HCT116 (cell line): ENCODE measurements at regions of chr2 and their contacts with region 1.

Region 1: DNA sequence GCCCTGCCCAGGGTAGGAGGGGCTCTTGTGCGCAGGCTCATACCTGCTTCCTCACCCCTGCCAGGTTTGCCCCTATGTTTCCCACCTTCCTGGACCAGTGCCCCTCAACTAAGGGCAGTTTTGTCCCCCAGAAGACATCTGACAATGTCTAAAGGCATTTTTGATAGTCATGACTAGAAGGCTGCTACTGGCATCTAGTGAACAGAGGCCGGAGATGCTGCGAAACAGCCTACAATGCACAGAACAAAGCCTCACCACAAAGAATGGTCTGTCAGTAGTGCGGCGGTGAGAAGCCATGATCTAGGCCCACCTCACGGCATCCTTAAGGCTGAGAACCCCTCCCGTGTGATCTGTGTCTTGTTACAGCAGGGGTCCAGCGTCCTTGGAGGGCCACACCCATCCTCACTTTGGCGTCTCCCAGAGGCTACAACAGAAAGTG is 96.0 kb downstream of the TMEM17 start:
- DNase-seq: no peak
- ATAC-seq: no peak
- H3K4me3 ChIP-seq: no peak overlapping the region
- H3K27ac ChIP-seq: no peak overlapping the region
- H3K4me1 ChIP-seq: peaks cover 15 to 25% of the 10 kb centered on the region in 2 experiments
- H3K27me3 ChIP-seq: no peaks in the 10 kb centered on the region
- CTCF ChIP-seq: 0 out of 6 replicates have a peak, but pooled peaks of 1 of the 3 experiments have one; percentile 35
- POLR2A ChIP-seq: no peak
- RAD21 ChIP-seq: peak; percentile 73

Region 2: DNA sequence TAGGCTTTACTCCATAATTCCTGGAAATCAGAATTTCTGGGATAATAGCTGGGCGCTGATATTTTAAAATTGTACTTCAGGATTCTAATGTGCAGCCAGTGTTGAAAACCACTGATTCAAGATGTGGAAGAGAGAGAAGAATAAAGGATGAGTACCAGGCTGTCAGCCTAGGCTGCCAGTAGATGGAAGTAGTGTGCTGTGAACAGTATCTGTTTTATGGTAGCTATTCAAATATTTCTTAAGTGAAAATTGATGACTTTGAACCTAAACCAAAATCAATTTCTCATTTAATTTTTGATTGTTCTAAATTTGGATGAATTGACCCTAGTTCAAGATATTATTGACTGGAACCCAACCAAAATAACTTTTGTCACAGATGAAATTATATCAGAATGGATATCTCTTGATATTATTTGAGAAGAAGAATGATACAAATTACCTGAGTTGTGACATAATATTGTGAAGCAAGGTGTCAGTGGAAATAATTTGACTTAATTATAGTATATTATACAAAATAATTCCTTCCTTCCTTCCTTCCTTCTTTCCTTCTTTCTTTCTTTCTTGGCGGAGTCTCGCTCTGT is 416.5 kb before region 1 on chr2:
- CTCF ChIA-PET with region 1: interaction called, 53 read pairs
- POLR2A ChIA-PET with region 1: interaction called, 7 read pairs
- RAD21 ChIA-PET with region 1: interaction called, 3 to 5 read pairs
- intact Hi-C with region 1: loop called (anchors 1 kb)
- DNase-seq: peak; percentile 38
- ATAC-seq: peak; percentile 78
- H3K4me3 ChIP-seq: no peak overlapping the region
- H3K27ac ChIP-seq: no peak overlapping the region
- H3K4me1 ChIP-seq: peaks cover 4 to 5% of the 10 kb centered on the region in 2 experiments
- H3K27me3 ChIP-seq: no peaks in the 10 kb centered on the region
- CTCF ChIP-seq: peak; percentile 64 to 73 (median 66); a peak in 5 of 6 replicates
- POLR2A ChIP-seq: no peak
- RAD21 ChIP-seq: peak; percentile 90

Region 3: DNA sequence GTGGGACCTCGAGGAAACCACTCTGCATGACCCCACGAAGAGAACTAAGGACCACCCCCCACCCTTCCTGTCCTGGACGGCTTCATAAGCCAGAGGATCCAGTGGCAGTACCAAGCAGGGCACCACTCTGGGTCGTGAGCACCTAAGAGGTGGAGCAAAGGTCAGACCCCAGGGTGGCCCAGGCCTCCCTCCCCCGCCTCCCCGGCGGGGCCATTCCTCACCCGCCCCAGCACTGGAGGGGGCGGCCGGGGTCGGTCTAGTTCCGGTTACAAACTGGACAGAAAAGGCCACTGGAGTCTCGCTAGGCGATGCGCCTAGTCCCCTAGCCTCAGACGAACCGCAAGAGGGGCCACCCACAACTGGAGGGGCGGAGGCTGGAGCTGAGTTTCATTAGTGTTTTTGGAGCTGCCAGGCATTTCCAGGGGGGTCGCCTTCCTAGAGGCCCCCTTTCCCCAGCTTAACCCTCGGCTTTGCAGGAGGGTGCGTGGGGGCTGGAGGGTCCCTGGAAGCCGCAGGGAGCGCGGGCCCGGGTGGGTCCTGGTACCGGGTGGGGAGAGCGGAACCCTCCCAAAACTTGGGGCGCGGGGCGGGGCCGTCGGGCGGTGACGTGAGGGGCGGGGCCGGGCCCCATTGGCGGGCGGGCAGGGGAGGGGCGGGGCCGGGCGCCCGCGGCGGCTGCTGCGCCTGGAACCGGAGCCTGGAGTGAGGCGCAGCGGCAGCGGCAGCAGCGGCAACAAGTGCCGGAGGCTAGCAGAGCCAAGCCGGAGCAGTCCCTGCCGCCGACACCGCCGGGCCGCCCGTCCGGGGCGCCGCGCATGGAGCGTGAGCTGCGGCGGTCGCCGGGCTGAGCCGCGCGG is 214.4 kb before region 1 on chr2 and contains the start of gene B3GNT2:
- CTCF ChIA-PET with region 1: no interaction called
- POLR2A ChIA-PET with region 1: no interaction called
- RAD21 ChIA-PET with region 1: no interaction called
- intact Hi-C with region 1: loop called (anchors 2 kb)
- DNase-seq: peak; percentile 19
- ATAC-seq: peak; percentile 84
- H3K4me3 ChIP-seq: peak within 1 kb of the TSS; percentile 82 to 92
- H3K27ac ChIP-seq: peak within 1 kb of the TSS; percentile 88
- H3K4me1 ChIP-seq: peaks cover 2 to 20% of the 10 kb centered on the region in 2 experiments; a peak in 3 of 4 replicates
- H3K27me3 ChIP-seq: no peaks in the 10 kb centered on the region
- CTCF ChIP-seq: no peak
- POLR2A ChIP-seq: peak; percentile 44
- RAD21 ChIP-seq: no peak
- total RNA-seq, gene B3GNT2: 21.5 TPM

Region 4: DNA sequence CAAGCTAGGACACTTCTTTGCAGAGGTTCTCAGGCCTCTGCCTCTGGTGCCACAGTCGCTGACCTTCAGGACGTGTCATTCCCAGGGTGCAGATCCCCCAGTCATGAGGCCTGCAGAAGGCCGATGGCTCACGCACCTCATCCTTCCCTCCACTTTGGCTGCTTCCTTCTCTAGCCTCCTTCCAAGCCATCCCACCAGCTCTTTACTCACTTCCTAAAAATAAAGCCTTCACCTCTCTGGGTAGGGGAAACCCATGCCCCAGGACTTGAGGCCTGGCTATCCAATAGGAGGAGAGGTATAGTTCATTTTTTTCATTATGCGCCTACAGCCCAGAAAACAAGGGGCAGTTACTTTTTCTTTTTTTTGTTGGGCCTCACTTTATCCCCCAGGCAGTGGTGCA is 122.8 kb before region 1 on chr2:
- CTCF ChIA-PET with region 1: no interaction called
- POLR2A ChIA-PET with region 1: no interaction called
- RAD21 ChIA-PET with region 1: no interaction called
- intact Hi-C with region 1: no loop called
- DNase-seq: no peak
- ATAC-seq: no peak
- H3K4me3 ChIP-seq: no peak overlapping the region
- H3K27ac ChIP-seq: no peak overlapping the region
- H3K4me1 ChIP-seq: peaks cover 15 to 16% of the 10 kb centered on the region in 2 experiments
- H3K27me3 ChIP-seq: no peaks in the 10 kb centered on the region
- CTCF ChIP-seq: no peak
- POLR2A ChIP-seq: no peak
- RAD21 ChIP-seq: no peak

Region 5: GRCh38 chr2:62297624-62298010 is 112.4 kb before region 1 on chr2:
- CTCF ChIA-PET with region 1: no interaction called
- POLR2A ChIA-PET with region 1: no interaction called
- RAD21 ChIA-PET with region 1: interaction called in 1 of 2 experiments, 3 read pairs
- intact Hi-C with region 1: loop called (anchors 5 kb)
- DNase-seq: no peak
- ATAC-seq: peak; percentile 48; the same call in 1 of the 2 replicates
- H3K4me3 ChIP-seq: no peak overlapping the region
- H3K27ac ChIP-seq: no peak overlapping the region
- H3K4me1 ChIP-seq: peaks cover 17 to 23% of the 10 kb centered on the region in 2 experiments
- H3K27me3 ChIP-seq: no peaks in the 10 kb centered on the region
- CTCF ChIP-seq: peak in 2 of 3 experiments; percentile 33 to 36; a peak in 4 of 6 replicates
- POLR2A ChIP-seq: no peak
- RAD21 ChIP-seq: no peak

Region 6: DNA sequence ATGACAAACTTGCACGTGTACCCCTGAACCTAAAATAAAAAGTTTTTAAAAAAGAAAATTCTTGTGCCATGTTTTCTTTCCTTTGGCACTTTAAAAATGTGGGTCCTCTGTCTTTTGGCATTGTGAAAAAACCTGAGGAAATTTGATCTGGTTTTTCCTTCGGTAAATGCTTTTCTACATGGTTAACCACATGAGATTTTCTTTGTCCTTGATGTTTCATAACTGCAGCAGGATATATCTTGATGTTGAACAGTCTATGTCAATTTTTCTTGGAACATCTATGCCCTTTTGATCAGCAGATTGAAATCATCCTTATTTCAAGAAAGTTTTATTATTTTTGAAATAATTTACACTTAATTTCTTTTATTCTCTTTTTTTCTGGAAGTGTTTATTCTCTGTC is 13.2 kb before region 1 on chr2:
- CTCF ChIA-PET with region 1: no interaction called
- POLR2A ChIA-PET with region 1: no interaction called
- RAD21 ChIA-PET with region 1: no interaction called
- intact Hi-C with region 1: no loop called
- DNase-seq: no peak
- ATAC-seq: no peak
- H3K4me3 ChIP-seq: no peak overlapping the region
- H3K27ac ChIP-seq: no peak overlapping the region
- H3K4me1 ChIP-seq: no peaks in the 10 kb centered on the region
- H3K27me3 ChIP-seq: no peaks in the 10 kb centered on the region
- CTCF ChIP-seq: no peak
- POLR2A ChIP-seq: no peak
- RAD21 ChIP-seq: no peak

Region 7: GRCh38 chr2:62511636-62512035 is 101.6 kb after region 1 on chr2:
- CTCF ChIA-PET with region 1: no interaction called
- POLR2A ChIA-PET with region 1: no interaction called
- RAD21 ChIA-PET with region 1: no interaction called
- intact Hi-C with region 1: no loop called
- DNase-seq: no peak
- ATAC-seq: no peak
- H3K4me3 ChIP-seq: no peak overlapping the region
- H3K27ac ChIP-seq: no peak overlapping the region
- H3K4me1 ChIP-seq: peaks cover 1 to 7% of the 10 kb centered on the region in 2 experiments; a peak in 3 of 4 replicates
- H3K27me3 ChIP-seq: no peaks in the 10 kb centered on the region
- CTCF ChIP-seq: no peak
- POLR2A ChIP-seq: no peak
- RAD21 ChIP-seq: no peak

Region 8: DNA sequence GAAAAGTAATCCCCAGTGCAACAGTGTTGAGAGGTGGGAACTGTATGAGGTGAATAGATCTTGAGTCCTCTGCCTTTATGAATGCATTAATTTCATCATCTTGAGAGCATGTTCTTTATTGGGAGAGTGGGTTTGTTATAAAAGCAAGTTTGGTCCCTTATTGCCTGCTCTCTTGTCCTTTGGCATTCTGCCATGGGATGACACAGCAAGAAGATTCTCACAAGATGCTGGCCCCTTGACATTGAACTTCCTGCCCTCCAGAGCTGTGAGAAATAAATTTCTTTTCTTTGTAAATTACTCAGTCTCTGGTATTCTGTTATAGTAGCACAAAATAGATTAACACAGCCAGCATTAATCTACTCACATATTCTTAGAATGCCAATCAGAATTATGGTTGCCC is 404.1 kb after region 1 on chr2:
- CTCF ChIA-PET with region 1: no interaction called
- POLR2A ChIA-PET with region 1: no interaction called
- RAD21 ChIA-PET with region 1: no interaction called
- intact Hi-C with region 1: no loop called
- DNase-seq: no peak
- ATAC-seq: no peak
- H3K4me3 ChIP-seq: no peak overlapping the region
- H3K27ac ChIP-seq: no peak overlapping the region
- H3K4me1 ChIP-seq: peaks cover 0 to 21% of the 10 kb centered on the region in 2 experiments; a peak in 2 of 4 replicates
- H3K27me3 ChIP-seq: no peaks in the 10 kb centered on the region
- CTCF ChIP-seq: no peak
- POLR2A ChIP-seq: no peak
- RAD21 ChIP-seq: no peak